ENCODE measurements at regions of chr19 and their contacts with region 1.

Region 1: GRCh38 chr19:45092747-45093678 is at the start of gene PPP1R37:
- H3K4me3 ChIP-seq: peak within 1 kb of the TSS; percentile 91
- H3K27ac ChIP-seq: peak within 1 kb of the TSS; percentile 96
- H3K4me1 ChIP-seq: peaks cover 27% of the 10 kb centered on the region
- CTCF ChIP-seq: peak; percentile 33; the same call in 1 of the 2 replicates

Region 2: GRCh38 chr19:45038931-45039893 is 53.8 kb before region 1 on chr19 and contains the start of gene CLASRP:
- CTCF ChIA-PET with region 1: interaction called, 5 read pairs
- POLR2A ChIA-PET with region 1: interaction called, 24 read pairs
- H3K4me3 ChIP-seq: peak within 1 kb of the TSS; percentile 96
- H3K27ac ChIP-seq: peak within 1 kb of the TSS; percentile 99
- H3K4me1 ChIP-seq: peaks cover 7% of the 10 kb centered on the region
- CTCF ChIP-seq: peak; percentile 57; the same call in 1 of the 2 replicates

Region 3: GRCh38 chr19:45079063-45079910 is 13.7 kb before region 1 on chr19 and contains the start of gene GEMIN7:
- CTCF ChIA-PET with region 1: interaction called, 13 read pairs
- POLR2A ChIA-PET with region 1: interaction called, 45 read pairs
- H3K4me3 ChIP-seq: peak within 1 kb of the TSS; percentile 75
- H3K27ac ChIP-seq: peak within 1 kb of the TSS; percentile 62; the same call in 1 of the 2 replicates
- H3K4me1 ChIP-seq: peaks cover 18% of the 10 kb centered on the region
- CTCF ChIP-seq: peak; percentile 35; the same call in 1 of the 2 replicates

Region 4: GRCh38 chr19:45125926-45126493 is 33.0 kb after region 1 on chr19:
- CTCF ChIA-PET with region 1: interaction called, 30 read pairs
- POLR2A ChIA-PET with region 1: interaction called, 13 read pairs
- H3K4me3 ChIP-seq: no peak overlapping the region
- H3K27ac ChIP-seq: no peak overlapping the region
- H3K4me1 ChIP-seq: peaks cover 13% of the 10 kb centered on the region
- CTCF ChIP-seq: peak; percentile 82

Region 5: GRCh38 chr19:45178262-45179071 is 85.5 kb after region 1 on chr19 and contains the start of gene BLOC1S3:
- CTCF ChIA-PET with region 1: interaction called, 3 read pairs
- POLR2A ChIA-PET with region 1: interaction called, 54 read pairs
- H3K4me3 ChIP-seq: peak within 1 kb of the TSS; percentile 83
- H3K27ac ChIP-seq: peak within 1 kb of the TSS; percentile 85
- H3K4me1 ChIP-seq: peaks cover 8% of the 10 kb centered on the region
- CTCF ChIP-seq: peak; percentile 97

Region 6: DNA sequence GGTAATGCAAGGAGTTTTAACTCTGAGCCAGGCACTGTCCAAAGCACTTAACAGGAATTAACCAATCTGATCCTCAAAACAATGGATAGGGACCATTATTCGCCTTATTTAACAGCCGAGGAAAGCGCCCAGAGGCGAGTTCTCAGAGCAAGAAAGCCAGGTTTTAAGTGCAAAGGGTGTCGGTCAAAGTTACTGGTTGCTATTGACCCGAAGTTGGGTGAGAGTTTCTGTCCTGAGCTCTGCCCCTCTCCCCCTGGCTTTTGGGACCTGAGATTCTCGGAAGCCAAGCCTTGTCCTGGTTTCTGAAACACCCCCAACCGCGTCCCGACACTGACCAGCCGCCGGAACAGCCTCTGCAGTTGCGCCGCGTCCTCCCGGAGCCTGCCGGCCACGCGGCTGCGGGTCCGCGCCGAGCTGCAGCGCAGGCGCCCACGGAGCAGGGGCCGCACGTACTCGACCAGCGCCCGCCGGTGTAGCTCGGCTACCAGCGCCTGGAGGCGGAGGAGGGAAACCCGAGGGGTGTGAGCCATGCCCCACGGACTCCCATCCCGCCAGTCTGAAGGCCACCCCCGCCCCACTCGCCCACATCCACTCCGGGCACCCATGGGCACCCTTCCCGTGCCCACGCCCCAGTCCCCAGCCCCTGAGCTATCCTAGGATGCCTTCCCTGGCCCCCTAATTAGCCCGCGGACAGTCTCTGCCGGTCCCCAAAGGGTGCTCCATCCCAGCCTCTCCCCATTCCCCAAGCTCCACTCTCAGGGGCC is 124.4 kb after region 1 on chr19:
- CTCF ChIA-PET with region 1: no interaction called
- POLR2A ChIA-PET with region 1: no interaction called
- H3K4me3 ChIP-seq: no peak overlapping the region
- H3K27ac ChIP-seq: no peak overlapping the region
- H3K4me1 ChIP-seq: no peaks in the 10 kb centered on the region
- CTCF ChIP-seq: no peak

Measured in HEK293 (cell line).